Calu3 (cell line): ENCODE measurements at regions of chr1 and their contacts with region 1.

Region 1: GRCh38 chr1:110619412-110620249 is 13.5 kb upstream of the KCNA2 start:
- DNase-seq: peak; percentile 86
- H3K4me3 Mint-ChIP-seq: peak overlapping the region; percentile 60
- H3K27ac Mint-ChIP-seq: no peak overlapping the region
- H3K4me1 Mint-ChIP-seq: peaks cover 25% of the 10 kb centered on the region
- H3K27me3 Mint-ChIP-seq: peaks cover 73% of the 10 kb centered on the region
- CTCF ChIP-seq: peak; percentile 72

Region 2: DNA sequence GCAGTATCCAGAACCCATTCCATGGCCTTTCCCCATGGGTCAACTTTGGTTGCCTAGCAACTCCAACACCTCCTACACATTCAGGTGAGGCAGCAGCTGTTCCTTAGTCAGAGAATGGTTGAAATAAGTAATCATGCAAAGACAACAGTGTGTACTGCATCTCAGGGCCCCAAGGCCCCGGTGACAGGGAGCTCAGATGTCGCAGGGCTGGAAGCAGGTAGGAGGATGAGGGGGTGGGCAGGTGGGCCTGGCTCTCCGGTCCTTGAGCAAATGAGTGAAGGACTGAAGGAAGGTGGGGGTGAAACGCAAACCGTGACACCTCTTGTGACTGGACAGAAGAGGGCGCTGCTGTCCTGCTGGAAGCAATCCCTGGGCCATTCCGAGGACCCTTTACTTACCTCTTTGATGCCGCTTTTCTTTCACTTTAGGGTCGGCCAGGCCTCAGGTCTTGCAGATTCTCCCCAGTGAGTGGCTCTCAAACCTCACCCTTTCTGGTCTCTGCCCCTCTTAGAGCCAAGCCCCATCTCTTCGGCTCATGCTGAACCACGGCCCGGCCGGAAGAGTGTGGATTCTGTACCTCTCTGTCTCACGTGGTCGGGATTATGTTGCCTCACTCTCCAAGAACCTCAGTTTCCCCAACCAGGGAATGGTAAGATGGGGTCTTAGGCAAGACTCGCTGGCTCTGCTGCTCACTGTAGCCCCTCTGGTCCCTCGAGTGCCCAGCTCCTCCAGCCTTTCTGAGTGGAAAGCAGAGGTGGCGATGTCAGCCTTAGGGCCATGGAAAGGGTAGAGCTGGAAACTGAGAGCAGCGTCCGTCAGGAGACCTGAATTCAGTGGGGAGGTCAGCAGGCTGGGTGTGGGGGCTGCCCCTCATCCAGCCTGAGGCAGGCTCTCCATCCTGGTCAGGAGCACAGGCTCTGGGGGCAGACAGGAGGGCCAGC is 95.0 kb before region 1 on chr1:
- CTCF ChIA-PET with region 1: interaction called, 3 read pairs
- intact Hi-C with region 1: loop called (anchors 2 kb)
- DNase-seq: peak; percentile 37
- H3K4me3 Mint-ChIP-seq: no peak overlapping the region
- H3K27ac Mint-ChIP-seq: no peak overlapping the region
- H3K4me1 Mint-ChIP-seq: peaks cover 6% of the 10 kb centered on the region
- H3K27me3 Mint-ChIP-seq: peaks cover 83% of the 10 kb centered on the region
- CTCF ChIP-seq: peak; percentile 51

Region 3: DNA sequence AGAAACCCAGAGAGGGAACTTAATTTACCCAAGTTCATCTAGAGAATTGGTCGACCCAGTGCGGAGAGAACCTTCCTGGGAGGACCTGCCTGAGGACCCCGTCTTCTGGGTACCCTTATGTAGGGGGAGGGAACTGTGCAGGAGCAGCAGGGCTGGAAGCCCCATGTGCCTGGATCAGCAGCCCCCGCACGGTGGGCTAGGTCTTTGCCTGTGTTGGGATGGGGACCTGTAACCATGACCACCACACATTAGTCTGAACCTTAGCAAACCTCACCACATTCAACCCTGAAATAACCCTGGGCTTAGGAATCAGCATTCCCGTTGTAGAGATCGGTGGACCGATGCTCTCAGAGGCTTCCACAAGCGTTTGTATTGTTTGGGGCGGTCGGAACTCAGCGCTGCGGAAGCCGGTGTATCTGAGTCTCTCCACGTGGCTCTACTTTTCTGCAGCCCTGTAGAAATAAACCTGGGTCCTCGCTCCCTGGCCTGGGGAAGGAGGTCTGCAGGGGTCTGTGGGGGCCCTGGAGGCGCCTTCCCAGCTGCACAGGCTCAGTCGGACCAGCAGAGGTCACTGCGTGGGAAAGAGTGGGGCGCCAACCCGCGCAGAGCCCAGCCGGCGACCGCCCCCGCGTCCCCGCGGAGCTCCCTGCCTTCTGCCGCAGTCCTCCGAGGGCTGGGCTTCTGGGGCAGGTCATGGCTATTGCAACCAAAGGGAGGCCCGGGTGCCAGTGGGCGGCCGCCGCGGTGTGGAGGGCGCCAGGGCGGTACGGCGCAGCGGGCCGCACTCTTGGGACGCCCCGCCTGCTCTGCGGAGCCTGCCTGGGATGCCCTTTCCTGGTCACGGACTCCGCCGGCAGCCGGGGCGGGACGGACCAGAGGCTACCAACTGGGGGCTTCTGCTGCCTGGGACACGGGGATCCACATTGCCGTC is 64.5 kb before region 1 on chr1:
- CTCF ChIA-PET with region 1: no interaction called
- intact Hi-C with region 1: loop called (anchors 5 kb)
- DNase-seq: peak; percentile 40
- H3K4me3 Mint-ChIP-seq: no peak overlapping the region
- H3K27ac Mint-ChIP-seq: no peak overlapping the region
- H3K4me1 Mint-ChIP-seq: no peaks in the 10 kb centered on the region
- H3K27me3 Mint-ChIP-seq: peaks cover 92% of the 10 kb centered on the region
- CTCF ChIP-seq: peak; percentile 51

Region 4: DNA sequence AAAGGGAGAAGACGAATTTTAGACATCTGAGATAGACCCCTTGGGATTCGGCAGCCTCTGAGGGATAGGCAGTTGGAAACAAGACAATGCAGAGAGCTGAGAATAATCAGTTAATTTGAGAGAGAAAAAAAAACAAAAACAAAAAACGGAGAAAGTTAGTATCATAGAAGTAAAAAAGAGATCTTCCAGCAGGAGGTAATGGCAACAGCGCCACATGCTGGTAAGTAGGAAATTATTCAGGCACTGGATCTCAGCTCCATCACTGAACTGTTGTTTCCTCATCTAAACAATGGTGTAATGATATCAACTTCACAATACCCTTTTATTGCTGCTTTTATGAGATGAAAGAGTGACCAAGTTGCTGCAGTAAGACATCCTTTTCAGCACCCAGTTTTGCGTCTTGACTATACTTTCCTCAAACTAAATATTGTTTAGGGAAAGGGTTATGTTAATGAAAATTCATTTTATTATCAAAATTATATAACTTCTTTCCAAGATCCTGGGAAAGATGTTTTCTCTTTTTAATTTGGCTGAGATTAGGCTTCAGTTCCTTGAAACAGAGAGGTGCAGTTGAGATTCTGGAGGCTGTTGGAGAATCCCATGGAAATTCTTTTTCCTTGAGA is 146.5 kb after region 1 on chr1:
- CTCF ChIA-PET with region 1: interaction called, 12 read pairs
- intact Hi-C with region 1: loop called (anchors 1 kb)
- DNase-seq: peak; percentile 16
- H3K4me3 Mint-ChIP-seq: no peak overlapping the region
- H3K27ac Mint-ChIP-seq: no peak overlapping the region
- H3K4me1 Mint-ChIP-seq: no peaks in the 10 kb centered on the region
- H3K27me3 Mint-ChIP-seq: peaks cover 82% of the 10 kb centered on the region
- CTCF ChIP-seq: peak; percentile 36